ENCODE measurements at regions of chrX and their contacts with region 1.

Region 1: GRCh38 chrX:123920105-123920785 is 41.3 kb upstream of the STAG2 start:
- DNase-seq: no peak
- H3K4me3 Mint-ChIP-seq: no peak overlapping the region
- H3K27ac Mint-ChIP-seq: no peak overlapping the region
- H3K4me1 Mint-ChIP-seq: no peaks in the 10 kb centered on the region
- H3K27me3 Mint-ChIP-seq: no peaks in the 10 kb centered on the region

Region 2: DNA sequence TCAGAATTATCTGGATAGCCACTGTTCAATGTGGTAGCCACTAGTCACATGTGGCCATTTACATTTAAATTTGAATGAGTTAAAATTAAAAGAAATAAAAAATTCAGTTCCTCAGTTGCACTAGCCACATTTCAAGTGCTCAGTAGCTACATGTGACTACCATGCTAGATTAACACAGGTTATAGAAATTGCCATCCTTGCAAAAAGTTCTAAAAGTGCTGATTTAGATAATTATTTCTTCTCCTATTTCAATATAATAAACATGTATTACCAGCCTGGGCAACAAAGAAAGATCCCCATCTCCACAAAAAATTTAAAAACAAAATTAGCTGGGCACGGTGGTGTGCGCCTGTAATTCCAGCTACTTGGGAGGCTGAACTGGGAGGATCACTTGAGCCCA is 29.6 kb after region 1 on chrX:
- CTCF ChIA-PET with region 1: no interaction called
- intact Hi-C with region 1: loop called (anchors 1 kb)
- DNase-seq: no peak
- H3K4me3 Mint-ChIP-seq: no peak overlapping the region
- H3K27ac Mint-ChIP-seq: no peak overlapping the region
- H3K4me1 Mint-ChIP-seq: no peaks in the 10 kb centered on the region
- H3K27me3 Mint-ChIP-seq: no peaks in the 10 kb centered on the region